ENCODE measurements at regions of chr6 and their contacts with region 1.

Region 1: GRCh38 chr6:7058250-7058923 is 49.4 kb upstream of the RREB1 start:
- DNase-seq: peak; percentile 54 to 92 (median 71)
- ATAC-seq: peak; percentile 95
- H3K4me3 ChIP-seq: no peak overlapping the region
- H3K27ac ChIP-seq: peak overlapping the region; percentile 86
- H3K4me1 ChIP-seq: peaks cover 10 to 36% of the 10 kb centered on the region in 2 experiments
- H3K27me3 ChIP-seq: no peaks in the 10 kb centered on the region
- CTCF ChIP-seq: no peak
- EP300 ChIP-seq: peak; percentile 86
- POLR2A ChIP-seq: peak; percentile 64
- RAD21 ChIP-seq: peak; percentile 25 to 57

Region 2: GRCh38 chr6:7042056-7042653 is 16.2 kb before region 1 on chr6:
- CTCF ChIA-PET with region 1: no interaction called
- POLR2A ChIA-PET with region 1: interaction called, 15 read pairs
- in situ Hi-C with region 1: no loop called
- intact Hi-C with region 1: loop called (anchors 2 kb)
- DNase-seq: peak; percentile 40 to 65 (median 50)
- ATAC-seq: peak; percentile 53
- H3K4me3 ChIP-seq: no peak overlapping the region
- H3K27ac ChIP-seq: peak overlapping the region; percentile 74
- H3K4me1 ChIP-seq: peaks cover 13 to 38% of the 10 kb centered on the region in 2 experiments
- H3K27me3 ChIP-seq: no peaks in the 10 kb centered on the region
- CTCF ChIP-seq: no peak
- EP300 ChIP-seq: no peak
- POLR2A ChIP-seq: no peak
- RAD21 ChIP-seq: no peak; a peak in 1 of 4 replicates

Region 3: GRCh38 chr6:7047966-7048365 is 10.4 kb before region 1 on chr6:
- CTCF ChIA-PET with region 1: no interaction called
- POLR2A ChIA-PET with region 1: interaction called, 15 read pairs
- in situ Hi-C with region 1: no loop called
- intact Hi-C with region 1: no loop called
- DNase-seq: peak; percentile 41 to 77 (median 60)
- ATAC-seq: peak; percentile 92
- H3K4me3 ChIP-seq: no peak overlapping the region
- H3K27ac ChIP-seq: peak overlapping the region; percentile 60
- H3K4me1 ChIP-seq: peaks cover 10 to 21% of the 10 kb centered on the region in 2 experiments
- H3K27me3 ChIP-seq: no peaks in the 10 kb centered on the region
- CTCF ChIP-seq: no peak
- EP300 ChIP-seq: peak; percentile 60
- POLR2A ChIP-seq: no peak
- RAD21 ChIP-seq: peak; percentile 8 to 33; a peak in 2 of 4 replicates

Measured in K562 (cell line).